Activated CD4-positive, alpha-beta memory T cell treated with anti-CD3 and anti-CD28 coated beads for 36 hours (primary cell): ENCODE measurements at regions of chr1 and their contacts with region 1.

Region 1: DNA sequence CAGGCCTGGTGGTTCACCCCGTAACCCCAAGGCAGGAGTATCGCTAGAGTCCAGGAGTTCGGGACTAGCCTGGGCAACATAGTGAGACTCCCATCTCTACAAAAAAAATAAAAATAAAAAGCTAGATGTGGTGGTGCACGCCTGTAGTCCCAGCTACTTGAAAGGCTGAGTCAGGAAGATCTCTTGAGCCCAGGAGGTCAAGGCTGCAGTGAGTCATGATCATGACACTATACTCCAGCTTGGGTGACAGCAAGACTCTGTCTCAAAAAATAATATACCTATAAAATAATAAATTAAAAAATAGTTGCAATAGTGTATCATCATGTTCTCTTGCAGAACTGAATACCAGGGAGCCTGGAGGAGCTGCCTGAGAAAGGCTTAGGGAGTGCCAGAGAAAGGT is 19.9 kb upstream of the TMEM39B start:
- DNase-seq: no peak
- H3K4me3 Mint-ChIP-seq: no peak overlapping the region
- H3K27ac Mint-ChIP-seq: no peak overlapping the region
- H3K4me1 Mint-ChIP-seq: peaks cover 3% of the 10 kb centered on the region
- H3K27me3 Mint-ChIP-seq: no peaks in the 10 kb centered on the region

Region 2: DNA sequence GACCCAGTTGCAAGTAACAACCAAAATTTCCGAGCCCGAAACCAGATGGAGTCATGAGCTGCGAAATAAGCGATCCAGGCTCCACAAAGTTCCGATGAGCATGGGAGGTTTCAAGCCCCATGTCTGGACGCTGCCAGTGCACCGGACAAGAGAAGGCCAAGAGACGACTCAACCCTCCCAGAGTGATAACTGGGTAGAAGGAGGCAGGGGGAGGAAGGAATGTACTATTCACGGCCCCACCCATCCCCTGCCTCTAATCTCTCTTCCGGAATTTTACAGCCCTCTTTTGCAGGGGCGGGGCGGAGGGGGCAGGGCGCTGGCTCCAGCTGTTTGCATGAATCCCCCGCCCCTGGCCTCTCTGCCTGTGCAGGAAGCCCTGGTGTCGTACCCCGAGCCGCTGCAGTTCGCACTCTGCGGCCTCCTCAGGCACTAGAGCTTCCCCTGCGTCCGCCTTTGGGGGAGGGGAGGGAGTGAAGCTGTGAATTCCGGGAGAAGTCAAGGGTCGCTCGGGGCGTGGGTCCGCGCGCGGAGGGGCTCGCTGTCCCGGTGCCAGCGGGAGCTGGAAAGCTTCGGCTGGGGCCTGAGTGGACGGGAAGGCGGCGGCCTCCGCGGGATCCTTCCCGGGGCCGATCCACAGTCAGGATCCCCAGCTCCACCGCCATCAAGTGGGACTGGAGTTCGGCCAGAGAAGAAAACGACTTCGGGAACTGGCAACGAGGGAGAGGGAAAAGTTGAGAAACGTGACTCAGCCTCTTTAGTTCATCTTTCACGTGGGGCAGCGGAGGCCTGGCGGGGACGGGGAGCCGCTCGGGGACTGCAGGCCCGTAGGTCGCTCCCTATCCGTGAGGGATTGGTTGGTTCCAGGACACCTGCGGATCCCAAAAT is 108.4 kb before region 1 on chr1:
- CTCF ChIA-PET with region 1: no interaction called
- POLR2A ChIA-PET with region 1: no interaction called
- intact Hi-C with region 1: no loop called
- DNase-seq: peak; percentile 89
- H3K4me3 Mint-ChIP-seq: peak overlapping the region; percentile 76
- H3K27ac Mint-ChIP-seq: peak overlapping the region; percentile 91
- H3K4me1 Mint-ChIP-seq: peaks cover 51% of the 10 kb centered on the region
- H3K27me3 Mint-ChIP-seq: no peaks in the 10 kb centered on the region

Region 3: DNA sequence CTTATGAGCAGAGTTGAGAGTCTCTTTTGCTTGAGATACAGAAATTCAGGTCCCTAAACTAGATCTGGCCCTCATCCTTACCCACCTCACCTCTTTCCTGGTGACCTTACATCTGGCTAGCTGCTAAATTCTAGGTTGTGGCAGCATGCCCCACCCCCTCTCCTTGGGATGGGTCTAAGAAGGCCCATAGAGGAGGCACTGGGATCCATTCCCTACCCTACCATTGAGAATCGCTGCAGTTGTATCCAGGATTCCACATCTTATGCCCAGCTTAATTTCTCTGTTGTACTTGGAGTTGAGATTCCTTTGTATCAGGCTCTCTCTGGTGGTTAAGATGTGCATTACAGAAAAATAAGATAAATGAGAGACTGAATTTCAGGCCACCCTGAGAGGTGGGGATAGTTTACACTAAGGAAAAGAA is 10.4 kb after region 1 on chr1:
- CTCF ChIA-PET with region 1: interaction called, 10 read pairs
- POLR2A ChIA-PET with region 1: interaction called, 3 read pairs
- intact Hi-C with region 1: no loop called
- DNase-seq: no peak
- H3K4me3 Mint-ChIP-seq: no peak overlapping the region
- H3K27ac Mint-ChIP-seq: no peak overlapping the region
- H3K4me1 Mint-ChIP-seq: peaks cover 5% of the 10 kb centered on the region
- H3K27me3 Mint-ChIP-seq: no peaks in the 10 kb centered on the region